K562 (cell line): ENCODE measurements at regions of chr3 and their contacts with region 1.

Region 1: DNA sequence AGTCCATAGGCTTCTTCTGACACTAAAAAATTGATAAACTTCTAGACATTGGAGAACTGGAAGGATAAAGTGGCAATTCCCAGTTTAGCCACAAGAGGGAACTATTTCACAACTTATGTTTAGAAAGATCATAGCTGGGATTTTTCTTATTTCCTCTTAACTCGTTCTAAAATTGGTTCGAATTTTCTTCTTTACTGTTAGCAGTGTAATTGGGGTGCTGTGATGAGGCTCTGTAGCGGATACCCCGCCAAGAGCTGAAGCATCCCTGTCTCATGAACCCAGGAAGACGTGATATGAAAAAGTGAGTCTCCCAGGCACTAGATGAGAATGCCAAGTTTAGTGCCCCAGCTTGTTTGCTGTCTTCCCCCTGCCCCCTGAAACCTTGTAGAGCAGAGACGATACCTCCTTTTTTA is 85.1 kb downstream of the PDCD6IP start:
- DNase-seq: peak; percentile 40 to 76 (median 66)
- ATAC-seq: peak; percentile 45
- H3K4me3 ChIP-seq: no peak overlapping the region
- H3K27ac ChIP-seq: no peak overlapping the region
- H3K4me1 ChIP-seq: peaks cover 0 to 22% of the 10 kb centered on the region in 2 experiments; a peak in 2 of 5 replicates
- H3K27me3 ChIP-seq: no peaks in the 10 kb centered on the region
- CTCF ChIP-seq: peak; percentile 61 to 89 (median 71); a peak in 5 of 6 replicates
- EP300 ChIP-seq: no peak
- POLR2A ChIP-seq: no peak
- RAD21 ChIP-seq: peak; percentile 91 to 96

Region 2: DNA sequence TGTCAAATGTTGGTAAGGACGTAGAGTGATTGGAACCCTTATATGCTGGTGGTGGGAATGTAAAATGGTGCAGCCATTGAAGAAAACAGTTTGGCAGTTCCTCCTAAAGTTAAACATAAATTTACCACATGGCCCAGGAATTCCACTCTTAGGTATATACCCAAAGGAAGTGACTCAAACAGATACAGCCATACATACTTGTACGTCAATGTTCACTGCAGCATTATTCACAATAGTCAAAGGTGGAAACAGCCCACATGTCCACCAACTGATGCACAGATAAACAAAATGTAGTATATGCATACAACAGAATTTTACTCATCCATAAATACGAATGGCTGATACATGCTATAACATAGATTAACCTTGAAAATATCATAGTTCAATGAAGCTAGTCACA is 178.7 kb before region 1 on chr3:
- CTCF ChIA-PET with region 1: no interaction called
- POLR2A ChIA-PET with region 1: no interaction called
- in situ Hi-C with region 1: no loop called
- intact Hi-C with region 1: no loop called
- DNase-seq: no peak
- ATAC-seq: no peak
- H3K4me3 ChIP-seq: no peak overlapping the region
- H3K27ac ChIP-seq: no peak overlapping the region
- H3K4me1 ChIP-seq: no peaks in the 10 kb centered on the region
- H3K27me3 ChIP-seq: no peaks in the 10 kb centered on the region
- CTCF ChIP-seq: no peak
- EP300 ChIP-seq: no peak
- POLR2A ChIP-seq: no peak
- RAD21 ChIP-seq: no peak

Region 3: GRCh38 chr3:33915791-33916546 is 32.4 kb after region 1 on chr3:
- CTCF ChIA-PET with region 1: no interaction called
- POLR2A ChIA-PET with region 1: interaction called, 10 read pairs
- in situ Hi-C with region 1: no loop called
- intact Hi-C with region 1: loop called (anchors 1 kb)
- DNase-seq: peak in 2 of 4 experiments; percentile 71 to 83
- ATAC-seq: peak; percentile 70
- H3K4me3 ChIP-seq: no peak overlapping the region
- H3K27ac ChIP-seq: no peak overlapping the region
- H3K4me1 ChIP-seq: peaks cover 29 to 57% of the 10 kb centered on the region in 2 experiments
- H3K27me3 ChIP-seq: no peaks in the 10 kb centered on the region
- CTCF ChIP-seq: peak; percentile 69 to 86 (median 75)
- EP300 ChIP-seq: no peak
- POLR2A ChIP-seq: no peak
- RAD21 ChIP-seq: peak; percentile 85 to 87

Region 4: GRCh38 chr3:33954956-33955355 is 71.4 kb after region 1 on chr3:
- CTCF ChIA-PET with region 1: no interaction called
- POLR2A ChIA-PET with region 1: no interaction called
- in situ Hi-C with region 1: no loop called
- intact Hi-C with region 1: loop called (anchors 2 kb)
- DNase-seq: peak in 3 of 4 experiments; percentile 30 to 69 (median 57)
- ATAC-seq: peak; percentile 91
- H3K4me3 ChIP-seq: no peak overlapping the region
- H3K27ac ChIP-seq: no peak overlapping the region
- H3K4me1 ChIP-seq: peaks cover 0 to 11% of the 10 kb centered on the region in 2 experiments; a peak in 2 of 5 replicates
- H3K27me3 ChIP-seq: no peaks in the 10 kb centered on the region
- CTCF ChIP-seq: peak; percentile 71 to 79 (median 77)
- EP300 ChIP-seq: no peak
- POLR2A ChIP-seq: no peak
- RAD21 ChIP-seq: peak; percentile 82 to 86

Region 5: GRCh38 chr3:34106879-34107278 is 223.3 kb after region 1 on chr3:
- CTCF ChIA-PET with region 1: no interaction called
- POLR2A ChIA-PET with region 1: interaction called, 4 read pairs
- in situ Hi-C with region 1: no loop called
- intact Hi-C with region 1: loop called (anchors 5 kb)
- DNase-seq: peak; percentile 46 to 61 (median 53)
- ATAC-seq: peak; percentile 95
- H3K4me3 ChIP-seq: no peak overlapping the region
- H3K27ac ChIP-seq: no peak overlapping the region
- H3K4me1 ChIP-seq: no peaks in the 10 kb centered on the region; a peak in 1 of 5 replicates
- H3K27me3 ChIP-seq: no peaks in the 10 kb centered on the region
- CTCF ChIP-seq: peak; percentile 58 to 81 (median 76)
- EP300 ChIP-seq: no peak
- POLR2A ChIP-seq: no peak
- RAD21 ChIP-seq: peak; percentile 40 to 67; a peak in 3 of 4 replicates

Region 6: DNA sequence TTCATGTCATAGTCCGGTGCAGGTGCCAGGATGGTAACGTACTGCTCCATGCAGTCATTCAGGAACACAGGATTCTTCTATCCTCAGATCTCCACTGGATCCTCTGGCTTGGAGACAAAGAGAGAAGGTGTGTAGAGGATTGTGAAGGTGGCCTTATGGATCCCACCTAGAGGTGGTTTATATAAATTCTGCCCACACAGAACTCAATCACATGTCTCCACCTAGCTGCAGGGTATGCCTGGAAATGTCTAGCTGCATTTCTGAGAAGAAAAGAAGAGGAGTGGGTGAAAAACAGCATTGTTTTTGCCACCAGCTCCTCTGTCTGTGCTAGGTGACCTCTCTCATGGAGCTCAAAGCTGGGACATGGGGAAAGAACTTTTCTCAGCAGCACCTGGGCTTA is 393.6 kb after region 1 on chr3:
- CTCF ChIA-PET with region 1: no interaction called
- POLR2A ChIA-PET with region 1: no interaction called
- in situ Hi-C with region 1: loop called (anchors 25 kb)
- intact Hi-C with region 1: loop called (anchors 1 kb)
- DNase-seq: no peak
- ATAC-seq: no peak
- H3K4me3 ChIP-seq: no peak overlapping the region
- H3K27ac ChIP-seq: no peak overlapping the region
- H3K4me1 ChIP-seq: no peaks in the 10 kb centered on the region
- H3K27me3 ChIP-seq: no peaks in the 10 kb centered on the region
- CTCF ChIP-seq: peak in 2 of 3 experiments; percentile 55 to 63; a peak in 4 of 6 replicates
- EP300 ChIP-seq: no peak
- POLR2A ChIP-seq: no peak
- RAD21 ChIP-seq: peak in 1 of 2 experiments; percentile 31; a peak in 1 of 4 replicates